BJ (cell line): ENCODE measurements at regions of chr2 and their contacts with region 1.

Region 1: GRCh38 chr2:100262555-100263320 is 59.6 kb downstream of the LONRF2 start:
- DNase-seq: no peak
- H3K4me3 ChIP-seq: no peak overlapping the region
- H3K27me3 ChIP-seq: peaks cover 2% of the 10 kb centered on the region; the same call in 1 of the 2 replicates
- CTCF ChIP-seq: peak; percentile 97

Region 2: GRCh38 chr2:98713332-98714015 is 1549.3 kb before region 1 on chr2:
- CTCF ChIA-PET with region 1: no interaction called
- POLR2A ChIA-PET with region 1: no interaction called
- DNase-seq: no peak
- H3K4me3 ChIP-seq: no peak overlapping the region
- H3K27me3 ChIP-seq: no peaks in the 10 kb centered on the region; the same call in 1 of the 2 replicates
- CTCF ChIP-seq: no peak

Region 3: DNA sequence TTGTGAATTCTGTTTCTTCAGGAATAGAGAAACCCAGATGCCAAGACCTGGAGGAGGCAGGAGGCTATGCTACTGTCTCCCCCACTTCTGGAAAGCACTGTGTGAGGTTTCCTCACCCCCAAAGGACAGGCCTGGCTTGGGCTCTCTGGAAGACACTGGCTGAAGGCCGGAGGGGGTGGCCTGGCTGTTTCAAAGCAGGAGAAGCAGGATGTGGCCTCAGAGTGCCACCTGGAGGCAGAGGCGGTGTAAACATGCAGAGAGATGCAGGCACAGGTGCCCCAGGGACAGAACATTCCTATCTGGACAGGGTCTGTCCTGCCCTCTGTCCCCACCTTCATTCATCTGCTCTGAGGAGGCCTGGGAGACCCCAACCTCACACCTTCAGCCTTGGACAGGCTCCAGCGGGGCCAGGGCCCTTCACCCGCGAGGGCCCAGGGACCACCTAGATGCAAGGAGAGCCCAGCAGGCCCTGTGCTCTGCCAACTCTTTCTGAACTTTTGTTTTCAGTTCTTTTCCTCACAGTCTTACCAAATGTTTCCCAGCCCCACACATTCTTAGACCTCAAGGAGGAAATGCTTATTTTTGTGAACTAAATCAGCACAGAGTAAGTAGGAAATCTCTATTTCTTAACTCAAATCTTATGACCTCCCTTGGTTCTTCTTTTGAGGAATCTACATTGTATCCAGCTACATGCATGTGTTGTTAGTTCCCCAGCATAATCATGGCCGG is 19.7 kb before region 1 on chr2:
- CTCF ChIA-PET with region 1: interaction called, 56 read pairs
- POLR2A ChIA-PET with region 1: no interaction called
- DNase-seq: no peak
- H3K4me3 ChIP-seq: no peak overlapping the region
- H3K27me3 ChIP-seq: no peaks in the 10 kb centered on the region
- CTCF ChIP-seq: peak; percentile 83

Region 4: DNA sequence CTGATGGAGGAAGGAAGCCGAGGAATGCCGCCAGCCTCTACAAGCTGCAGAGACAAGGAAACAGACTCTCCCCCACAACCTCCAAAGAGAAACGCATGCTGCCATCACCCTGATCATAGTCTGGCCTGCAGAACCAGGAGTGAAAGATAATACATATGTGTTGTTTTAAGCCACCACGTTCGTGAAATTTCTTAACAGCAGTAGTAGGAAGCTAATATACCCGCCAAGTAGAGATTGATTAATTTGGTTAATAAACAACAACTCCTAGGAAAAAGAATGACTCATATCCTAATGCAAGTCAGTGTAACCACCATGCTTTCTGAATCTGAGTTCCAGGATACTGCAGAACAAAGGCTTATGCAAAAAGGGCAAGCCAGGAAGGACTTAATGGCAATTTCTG is 23.0 kb after region 1 on chr2:
- CTCF ChIA-PET with region 1: interaction called, 24 read pairs
- POLR2A ChIA-PET with region 1: no interaction called
- DNase-seq: no peak
- H3K4me3 ChIP-seq: no peak overlapping the region
- H3K27me3 ChIP-seq: 0 out of 2 replicates have a peak, but pooled peaks cover 4% of the 10 kb centered on the region
- CTCF ChIP-seq: no peak

Region 5: DNA sequence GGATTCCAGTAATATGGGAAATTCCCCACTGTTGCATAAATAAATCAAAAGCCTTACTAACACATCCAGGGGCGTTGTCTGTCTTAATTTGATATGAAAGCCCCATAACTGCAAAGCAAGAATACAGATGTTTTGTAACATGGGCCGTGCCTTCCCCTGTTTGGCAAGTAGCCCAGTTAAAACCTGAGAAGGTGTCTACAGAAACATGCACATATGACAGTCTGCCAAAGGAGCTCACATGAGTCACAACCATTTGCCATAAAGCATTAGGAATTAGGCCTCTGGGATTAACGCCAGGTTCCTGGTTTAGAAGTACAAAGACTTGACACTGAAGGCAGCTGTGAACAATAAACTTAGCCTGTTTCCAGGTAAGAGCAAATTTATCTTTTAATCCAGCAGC is 102.7 kb after region 1 on chr2:
- CTCF ChIA-PET with region 1: interaction called, 13 read pairs
- POLR2A ChIA-PET with region 1: no interaction called
- DNase-seq: peak; percentile 55
- H3K4me3 ChIP-seq: no peak overlapping the region
- H3K27me3 ChIP-seq: no peaks in the 10 kb centered on the region
- CTCF ChIP-seq: no peak

Region 6: DNA sequence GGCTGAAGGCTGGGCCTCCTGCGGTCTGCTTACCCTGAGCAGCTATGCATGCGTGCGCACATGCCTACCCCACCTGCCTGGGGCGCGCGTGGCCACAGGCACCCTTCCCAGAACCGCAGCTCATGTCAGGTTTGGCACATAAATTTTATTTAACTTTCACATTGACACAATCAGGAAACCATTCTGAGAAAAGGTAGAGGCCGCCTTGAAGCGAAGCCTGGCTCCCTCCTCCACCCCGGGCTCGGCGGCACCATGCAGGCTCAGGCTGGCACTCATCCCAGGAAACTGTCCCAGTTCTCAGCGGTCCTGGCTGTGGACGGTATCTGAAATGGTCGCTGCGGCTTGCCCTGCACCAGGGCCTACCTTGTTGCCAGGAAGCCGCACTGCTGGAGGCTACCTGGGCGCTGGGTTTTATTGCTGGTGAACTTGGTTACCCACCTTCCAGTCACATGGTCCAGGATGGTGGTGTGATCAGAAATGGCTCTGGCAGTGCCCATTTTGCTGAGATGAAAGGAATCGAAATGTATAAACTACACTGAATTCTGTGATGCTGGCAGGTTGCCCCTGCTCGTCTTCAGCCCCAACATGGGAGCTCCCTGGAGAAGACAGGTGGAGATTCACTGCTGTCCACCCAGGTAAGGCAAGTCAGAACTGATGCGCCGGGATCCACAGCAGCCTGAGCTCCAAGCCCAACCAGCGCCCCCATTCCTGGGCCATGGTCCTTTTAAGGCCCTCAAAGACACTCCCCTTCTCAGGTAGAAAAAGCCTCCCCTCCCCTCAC is 129.2 kb after region 1 on chr2:
- CTCF ChIA-PET with region 1: interaction called, 63 read pairs
- POLR2A ChIA-PET with region 1: no interaction called
- DNase-seq: no peak
- H3K4me3 ChIP-seq: no peak overlapping the region
- H3K27me3 ChIP-seq: no peaks in the 10 kb centered on the region
- CTCF ChIP-seq: no peak

Region 7: DNA sequence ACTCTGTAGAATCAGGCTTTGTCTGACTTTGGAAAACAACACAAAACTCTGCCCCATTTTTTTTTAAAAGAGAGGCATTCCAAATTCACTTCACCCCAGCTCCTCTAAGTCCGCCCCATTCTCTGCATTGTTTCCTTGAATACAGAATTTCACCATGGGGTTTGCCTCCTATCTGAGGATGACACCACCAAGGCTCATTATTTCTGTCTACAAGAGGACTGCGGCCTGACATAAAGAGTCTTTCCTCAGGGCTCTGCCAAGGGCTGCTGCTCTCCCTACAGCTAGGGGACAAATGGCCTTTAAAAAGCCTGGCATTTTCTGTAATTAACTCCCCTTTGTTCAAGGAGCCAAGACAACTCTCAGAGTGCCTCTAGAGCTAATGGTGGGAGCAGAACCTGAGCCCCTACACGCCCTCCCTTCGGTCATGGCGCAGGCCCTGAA is 150.2 kb after region 1 on chr2:
- CTCF ChIA-PET with region 1: interaction called, 10 read pairs
- POLR2A ChIA-PET with region 1: no interaction called
- DNase-seq: no peak
- H3K4me3 ChIP-seq: no peak overlapping the region
- H3K27me3 ChIP-seq: no peaks in the 10 kb centered on the region
- CTCF ChIP-seq: no peak